Transverse colon (tissue), 4 donors: ENCODE measurements at regions of chr1 and their contacts with region 1.

Region 1: DNA sequence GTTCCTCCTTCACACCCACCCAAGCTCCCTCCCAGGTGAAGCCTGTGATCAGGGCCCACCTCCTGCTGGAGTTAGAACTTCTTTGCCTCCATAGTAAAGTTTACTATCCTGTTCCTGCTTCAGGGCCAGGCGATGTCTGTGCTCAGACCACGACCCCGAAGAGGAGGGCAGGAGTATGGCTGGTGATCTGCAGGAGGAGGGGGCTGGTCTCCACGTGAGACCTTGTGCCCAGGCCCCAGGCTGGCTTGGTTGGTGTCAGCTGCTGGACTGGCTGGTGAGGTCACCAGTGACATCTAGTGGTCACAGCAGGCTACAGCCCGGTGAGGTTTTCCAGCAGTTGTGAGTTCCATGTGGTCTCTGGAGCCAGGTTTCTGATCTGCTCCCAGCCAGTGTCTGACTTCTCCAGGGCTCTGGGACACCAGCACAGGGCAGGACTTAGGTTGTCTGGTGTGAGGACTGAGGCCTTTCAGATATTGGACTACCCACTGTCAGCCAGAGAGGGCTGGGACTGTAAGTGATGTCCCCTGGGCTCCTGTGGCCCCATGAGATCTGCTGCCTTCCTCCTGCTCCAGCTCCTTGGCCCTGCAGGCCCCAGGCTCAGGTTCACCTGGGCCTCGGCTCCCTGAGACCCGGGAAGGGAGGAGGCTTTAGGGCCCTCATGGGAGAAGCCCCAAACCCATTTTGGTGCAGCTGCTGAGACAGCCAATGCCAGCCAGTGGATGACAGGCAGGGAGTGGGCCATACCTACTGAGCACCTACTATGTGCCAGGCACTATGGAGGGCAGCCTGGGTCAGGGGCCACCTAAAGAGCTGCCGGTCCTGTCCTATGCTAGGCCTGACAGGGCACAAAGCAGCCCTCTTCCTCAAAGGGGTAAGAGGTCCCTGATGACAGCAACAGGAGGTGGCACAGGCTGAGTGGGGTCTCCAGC is 6.0 kb upstream of the UBL4B start:
- DNase-seq: peak; percentile 67
- H3K4me3 ChIP-seq: no peak overlapping the region
- H3K27ac ChIP-seq: no peak overlapping the region
- H3K4me1 ChIP-seq: no peaks in the 10 kb centered on the region
- H3K27me3 ChIP-seq: no peaks in the 10 kb centered on the region
- CTCF ChIP-seq: peak; percentile 88 to 92 (median 89)
- EP300 ChIP-seq: no peak
- POLR2A ChIP-seq: no peak

Region 2: DNA sequence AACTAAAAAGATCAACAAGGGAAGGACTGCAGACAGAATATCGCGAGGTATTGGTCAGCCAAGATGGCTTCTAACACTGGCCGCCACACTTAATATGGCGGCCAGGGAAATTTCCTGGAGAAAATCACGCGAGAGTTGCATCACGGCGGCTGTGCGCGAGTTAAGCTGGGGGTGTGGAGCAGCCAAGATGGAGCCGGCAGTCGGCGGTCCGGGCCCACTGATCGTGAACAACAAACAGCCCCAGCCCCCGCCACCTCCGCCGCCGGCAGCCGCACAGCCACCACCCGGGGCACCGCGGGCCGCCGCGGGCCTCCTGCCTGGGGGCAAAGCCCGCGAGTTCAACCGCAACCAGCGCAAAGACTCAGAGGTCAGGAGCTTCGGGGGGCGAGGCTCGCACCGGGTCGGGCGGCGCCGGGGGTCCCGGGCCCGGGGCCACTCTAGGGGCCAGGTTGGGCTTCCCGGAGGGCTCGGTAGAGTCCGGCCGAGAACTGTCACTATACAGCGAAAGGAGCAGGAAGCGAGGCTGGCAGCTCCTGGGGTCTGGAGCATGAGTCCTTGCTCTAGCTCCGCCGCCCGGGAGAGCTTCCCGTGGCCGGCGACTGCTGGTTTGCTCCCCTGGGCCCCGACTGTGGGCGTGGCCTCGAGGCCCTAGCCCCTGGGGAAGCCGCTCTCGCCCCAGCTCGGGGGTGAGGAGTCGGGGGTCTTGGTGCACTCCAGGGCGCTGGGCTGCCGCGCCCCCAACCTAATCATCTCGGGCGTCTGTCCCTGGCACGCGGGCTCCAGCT is 71.6 kb before region 1 on chr1 and contains the start of gene STRIP1:
- in situ Hi-C with region 1: no loop called
- intact Hi-C with region 1: no loop called
- DNase-seq: peak; percentile 95
- H3K4me3 ChIP-seq: peak within 1 kb of the TSS; percentile 90 to 99 (median 99)
- H3K27ac ChIP-seq: peak within 1 kb of the TSS; percentile 93 to 96 (median 94)
- H3K4me1 ChIP-seq: peaks cover 4 to 23% (median 16%) of the 10 kb centered on the region in 4 donors
- H3K27me3 ChIP-seq: no peaks in the 10 kb centered on the region
- CTCF ChIP-seq: no peak
- EP300 ChIP-seq: no peak
- POLR2A ChIP-seq: peak; percentile 64
- total RNA-seq, gene STRIP1: 32.6 to 72.2 (median 58.7) TPM

Region 3: DNA sequence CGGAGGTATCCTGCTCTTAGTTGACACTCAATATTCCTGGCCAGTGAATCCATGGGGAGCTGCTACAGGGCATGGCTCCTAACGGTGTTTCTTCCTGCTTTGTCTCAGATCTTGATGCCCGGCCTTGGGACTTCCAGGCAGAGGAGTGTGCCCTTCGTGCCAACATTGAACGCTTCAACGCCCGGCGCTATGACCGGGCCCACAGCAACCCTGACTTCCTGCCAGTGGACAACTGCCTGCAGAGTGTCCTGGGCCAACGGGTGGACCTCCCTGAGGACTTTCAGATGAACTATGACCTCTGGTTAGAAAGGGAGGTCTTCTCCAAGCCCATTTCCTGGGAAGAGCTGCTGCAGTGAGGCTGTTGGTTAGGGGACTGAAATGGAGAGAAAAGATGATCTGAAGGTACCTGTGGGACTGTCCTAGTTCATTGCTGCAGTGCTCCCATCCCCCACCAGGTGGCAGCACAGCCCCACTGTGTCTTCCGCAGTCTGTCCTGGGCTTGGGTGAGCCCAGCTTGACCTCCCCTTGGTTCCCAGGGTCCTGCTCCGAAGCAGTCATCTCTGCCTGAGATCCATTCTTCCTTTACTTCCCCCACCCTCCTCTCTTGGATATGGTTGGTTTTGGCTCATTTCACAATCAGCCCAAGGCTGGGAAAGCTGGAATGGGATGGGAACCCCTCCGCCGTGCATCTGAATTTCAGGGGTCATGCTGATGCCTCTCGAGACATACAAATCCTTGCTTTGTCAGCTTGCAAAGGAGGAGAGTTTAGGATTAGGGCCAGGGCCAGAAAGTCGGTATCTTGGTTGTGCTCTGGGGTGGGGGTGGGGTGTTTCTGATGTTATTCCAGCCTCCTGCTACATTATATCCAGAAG is 52.5 kb before region 1 on chr1:
- in situ Hi-C with region 1: loop called in 1 of 4 experiments (anchors 5 kb)
- intact Hi-C with region 1: loop called (anchors 5 kb)
- DNase-seq: peak; percentile 77
- H3K4me3 ChIP-seq: no peak overlapping the region
- H3K27ac ChIP-seq: no peak overlapping the region
- H3K4me1 ChIP-seq: peaks cover 4 to 30% (median 21%) of the 10 kb centered on the region in 4 donors
- H3K27me3 ChIP-seq: no peaks in the 10 kb centered on the region
- CTCF ChIP-seq: peak; percentile 81 to 97 (median 94)
- EP300 ChIP-seq: no peak
- POLR2A ChIP-seq: no peak

Region 4: DNA sequence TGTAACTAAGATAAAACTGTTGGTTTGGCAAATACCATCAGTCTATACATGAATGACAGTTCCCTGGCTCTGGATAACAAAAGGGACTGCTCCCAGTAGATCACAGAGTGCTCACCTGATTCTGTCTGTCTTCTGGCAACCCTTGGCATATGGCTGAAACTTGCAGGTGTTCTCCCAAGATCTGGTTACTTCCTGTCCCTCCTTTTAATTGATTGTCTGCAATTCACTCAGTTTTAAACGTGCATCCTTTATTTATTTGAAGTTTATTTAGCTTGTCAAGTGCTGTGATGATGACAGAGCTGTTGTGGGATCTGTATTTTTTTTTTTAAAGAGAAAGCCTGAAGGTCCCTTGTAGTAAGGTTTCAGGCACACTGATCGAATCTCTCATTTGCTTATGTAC is 565.1 kb after region 1 on chr1:
- in situ Hi-C with region 1: no loop called
- intact Hi-C with region 1: no loop called
- DNase-seq: no peak
- H3K4me3 ChIP-seq: no peak overlapping the region
- H3K27ac ChIP-seq: peak overlapping the region in 2 of 4 donors; percentile 23 to 79
- H3K4me1 ChIP-seq: peaks cover 0 to 13% (median 10%) of the 10 kb centered on the region in 4 donors
- H3K27me3 ChIP-seq: peaks cover 81% of the 10 kb centered on the region
- CTCF ChIP-seq: no peak
- EP300 ChIP-seq: no peak
- POLR2A ChIP-seq: no peak